GM12878 (cell line): ENCODE measurements at regions of chr7 and their contacts with region 1.

Region 1: GRCh38 chr7:77393269-77393668 is 22.9 kb downstream of the GSAP start:
- DNase-seq: peak; percentile 85
- ATAC-seq: peak; percentile 92
- H3K4me3 ChIP-seq: no peak overlapping the region
- H3K27ac ChIP-seq: peak overlapping the region; percentile 72
- H3K4me1 ChIP-seq: peaks cover 30% of the 10 kb centered on the region
- H3K27me3 ChIP-seq: no peaks in the 10 kb centered on the region
- CTCF ChIP-seq: no peak
- EP300 ChIP-seq: peak in 1 of 2 experiments; percentile 70; a peak in 2 of 4 replicates
- POLR2A ChIP-seq: no peak
- RAD21 ChIP-seq: 0 out of 2 replicates have a peak, but pooled peaks have one; percentile 3

Region 2: GRCh38 chr7:77351539-77352004 is 41.7 kb before region 1 on chr7:
- CTCF ChIA-PET with region 1: interaction called, 3 read pairs
- POLR2A ChIA-PET with region 1: no interaction called
- RAD21 ChIA-PET with region 1: no interaction called
- SMC1A ChIA-PET with region 1: interaction called, 4 read pairs
- in situ Hi-C with region 1: no loop called
- intact Hi-C with region 1: loop called (anchors 2 kb)
- DNase-seq: peak; percentile 98
- ATAC-seq: peak; percentile 94
- H3K4me3 ChIP-seq: no peak overlapping the region
- H3K27ac ChIP-seq: peak overlapping the region; percentile 61
- H3K4me1 ChIP-seq: peaks cover 23% of the 10 kb centered on the region
- H3K27me3 ChIP-seq: no peaks in the 10 kb centered on the region
- CTCF ChIP-seq: no peak
- EP300 ChIP-seq: peak; percentile 91 to 92; a peak in 3 of 4 replicates
- POLR2A ChIP-seq: peak; percentile 56; the same call in 1 of the 2 replicates
- RAD21 ChIP-seq: 0 out of 2 replicates have a peak, but pooled peaks have one; percentile 1

Region 3: DNA sequence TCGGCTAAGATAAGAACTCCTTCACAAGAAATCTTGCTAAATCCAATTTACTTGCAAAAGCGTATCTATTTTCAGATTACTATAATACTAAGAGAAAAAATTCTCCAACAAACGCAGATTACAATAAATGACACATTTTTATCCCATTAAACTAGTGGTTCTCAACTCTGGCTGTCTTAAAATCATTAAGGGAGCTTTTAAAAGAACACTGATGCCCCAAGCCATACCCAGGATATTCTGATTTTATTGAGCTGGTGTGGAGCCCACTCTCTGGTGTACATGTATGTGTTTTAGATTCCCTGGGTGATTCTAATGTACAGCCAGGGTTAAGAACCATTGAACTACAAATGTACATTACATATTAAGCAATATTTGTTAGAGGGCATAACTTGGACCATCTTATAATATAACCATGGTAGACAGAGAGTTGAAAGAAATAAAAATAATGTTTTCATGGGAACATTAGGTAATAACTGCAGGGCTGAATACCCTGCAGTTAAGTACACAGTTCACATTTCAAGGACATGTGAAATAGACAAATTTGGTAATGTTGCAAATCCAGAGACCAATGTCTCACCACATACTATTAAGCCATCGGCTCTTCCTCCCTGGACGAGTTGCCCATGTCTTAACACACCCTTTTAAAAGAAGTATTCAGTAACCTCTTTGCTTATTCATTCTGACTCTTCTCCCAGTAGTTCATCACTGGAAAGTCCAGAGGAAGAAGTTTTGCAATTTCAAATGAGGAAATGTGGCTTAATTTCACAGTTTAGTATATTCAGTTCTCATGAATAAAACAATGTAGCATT is 16.7 kb after region 1 on chr7:
- CTCF ChIA-PET with region 1: interaction called, 4 read pairs
- POLR2A ChIA-PET with region 1: interaction called, 12 read pairs
- RAD21 ChIA-PET with region 1: interaction called, 12 read pairs
- SMC1A ChIA-PET with region 1: interaction called, 34 read pairs
- in situ Hi-C with region 1: no loop called
- intact Hi-C with region 1: loop called (anchors 2 kb)
- DNase-seq: no peak
- ATAC-seq: no peak
- H3K4me3 ChIP-seq: no peak overlapping the region
- H3K27ac ChIP-seq: no peak overlapping the region
- H3K4me1 ChIP-seq: no peaks in the 10 kb centered on the region
- H3K27me3 ChIP-seq: no peaks in the 10 kb centered on the region
- CTCF ChIP-seq: no peak
- EP300 ChIP-seq: no peak
- POLR2A ChIP-seq: no peak
- RAD21 ChIP-seq: no peak

Region 4: GRCh38 chr7:77657427-77658224 is 264.4 kb after region 1 on chr7:
- CTCF ChIA-PET with region 1: no interaction called
- POLR2A ChIA-PET with region 1: no interaction called
- RAD21 ChIA-PET with region 1: no interaction called
- SMC1A ChIA-PET with region 1: no interaction called
- in situ Hi-C with region 1: no loop called
- intact Hi-C with region 1: no loop called
- DNase-seq: peak; percentile 12
- ATAC-seq: peak; percentile 87
- H3K4me3 ChIP-seq: no peak overlapping the region
- H3K27ac ChIP-seq: no peak overlapping the region
- H3K4me1 ChIP-seq: no peaks in the 10 kb centered on the region
- H3K27me3 ChIP-seq: no peaks in the 10 kb centered on the region
- CTCF ChIP-seq: peak; percentile 50 to 67 (median 54)
- EP300 ChIP-seq: no peak
- POLR2A ChIP-seq: no peak
- RAD21 ChIP-seq: peak; percentile 94

Region 5: GRCh38 chr7:77696198-77697028 is 303.1 kb after region 1 on chr7 and contains the start of gene RSBN1L:
- CTCF ChIA-PET with region 1: no interaction called
- POLR2A ChIA-PET with region 1: no interaction called
- RAD21 ChIA-PET with region 1: no interaction called
- SMC1A ChIA-PET with region 1: no interaction called
- in situ Hi-C with region 1: no loop called
- intact Hi-C with region 1: no loop called
- DNase-seq: peak; percentile 93
- ATAC-seq: peak; percentile 95
- H3K4me3 ChIP-seq: peak within 1 kb of the TSS; percentile 100
- H3K27ac ChIP-seq: peak within 1 kb of the TSS; percentile 95
- H3K4me1 ChIP-seq: no peaks in the 10 kb centered on the region
- H3K27me3 ChIP-seq: no peaks in the 10 kb centered on the region
- CTCF ChIP-seq: peak; percentile 14 to 51 (median 37); a peak in 5 of 6 replicates
- EP300 ChIP-seq: no peak
- POLR2A ChIP-seq: peak; percentile 91
- RAD21 ChIP-seq: no peak
- polyA plus RNA-seq, gene RSBN1L: 4.6 to 6.9 TPM